Activated CD4-positive, alpha-beta T cell treated with anti-CD3 and anti-CD28 coated beads for 36 hours (primary cell): ENCODE measurements at regions of chr2 and their contacts with region 1.

Region 1: DNA sequence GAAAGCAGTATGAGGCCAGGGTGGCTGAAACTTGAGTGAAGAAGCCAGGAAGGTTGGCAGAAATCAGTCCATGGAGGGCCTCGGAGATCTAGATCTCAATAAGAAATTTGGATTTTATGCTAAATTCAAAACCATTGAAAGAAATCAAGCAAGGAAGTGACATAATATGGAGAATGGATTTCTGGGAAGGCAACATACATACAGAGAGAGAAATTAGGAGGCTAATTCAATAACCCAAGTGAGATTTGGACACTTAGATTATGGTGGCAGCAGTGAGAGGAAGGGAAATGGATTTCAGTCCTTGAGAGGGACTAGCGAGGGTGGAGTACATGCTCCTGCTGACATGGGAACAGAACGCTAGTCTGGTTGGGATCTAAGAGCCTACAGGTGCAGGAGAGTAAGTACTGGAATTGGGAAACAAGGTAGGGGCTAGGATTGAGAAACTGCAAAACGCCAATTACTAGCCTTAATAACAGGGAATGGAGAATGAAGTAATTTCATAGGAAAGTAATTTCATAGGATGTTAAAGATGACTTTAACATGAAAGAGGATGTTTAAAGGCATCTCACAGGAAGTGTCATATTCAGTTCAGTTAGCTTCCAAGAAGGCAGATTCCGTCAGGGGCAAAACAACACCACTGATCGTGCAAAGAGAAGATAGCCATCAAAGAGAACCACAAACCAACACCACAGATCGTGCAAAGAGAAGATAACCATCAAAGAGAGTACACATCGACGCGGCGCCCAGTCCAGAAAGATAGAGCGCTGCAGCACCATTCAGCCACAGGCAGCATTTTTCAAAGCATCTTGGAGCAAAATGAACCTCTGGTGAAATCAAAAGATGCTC is 27.2 kb downstream of the CDKL4 start:
- DNase-seq: peak; percentile 76
- ATAC-seq: peak; percentile 70
- H3K4me3 Mint-ChIP-seq: peak overlapping the region; percentile 45
- H3K27ac Mint-ChIP-seq: peak overlapping the region; percentile 88
- H3K4me1 Mint-ChIP-seq: peaks cover 44% of the 10 kb centered on the region
- H3K27me3 Mint-ChIP-seq: no peaks in the 10 kb centered on the region

Region 2: GRCh38 chr2:39099870-39100728 is 116.5 kb before region 1 on chr2:
- CTCF ChIA-PET with region 1: no interaction called
- POLR2A ChIA-PET with region 1: interaction called, 5 read pairs
- intact Hi-C with region 1: loop called in 1 of 2 experiments (anchors 2 kb)
- DNase-seq: peak; percentile 33
- ATAC-seq: peak; percentile 92
- H3K4me3 Mint-ChIP-seq: no peak overlapping the region
- H3K27ac Mint-ChIP-seq: peak overlapping the region; percentile 87
- H3K4me1 Mint-ChIP-seq: peaks cover 56% of the 10 kb centered on the region
- H3K27me3 Mint-ChIP-seq: no peaks in the 10 kb centered on the region

Region 3: DNA sequence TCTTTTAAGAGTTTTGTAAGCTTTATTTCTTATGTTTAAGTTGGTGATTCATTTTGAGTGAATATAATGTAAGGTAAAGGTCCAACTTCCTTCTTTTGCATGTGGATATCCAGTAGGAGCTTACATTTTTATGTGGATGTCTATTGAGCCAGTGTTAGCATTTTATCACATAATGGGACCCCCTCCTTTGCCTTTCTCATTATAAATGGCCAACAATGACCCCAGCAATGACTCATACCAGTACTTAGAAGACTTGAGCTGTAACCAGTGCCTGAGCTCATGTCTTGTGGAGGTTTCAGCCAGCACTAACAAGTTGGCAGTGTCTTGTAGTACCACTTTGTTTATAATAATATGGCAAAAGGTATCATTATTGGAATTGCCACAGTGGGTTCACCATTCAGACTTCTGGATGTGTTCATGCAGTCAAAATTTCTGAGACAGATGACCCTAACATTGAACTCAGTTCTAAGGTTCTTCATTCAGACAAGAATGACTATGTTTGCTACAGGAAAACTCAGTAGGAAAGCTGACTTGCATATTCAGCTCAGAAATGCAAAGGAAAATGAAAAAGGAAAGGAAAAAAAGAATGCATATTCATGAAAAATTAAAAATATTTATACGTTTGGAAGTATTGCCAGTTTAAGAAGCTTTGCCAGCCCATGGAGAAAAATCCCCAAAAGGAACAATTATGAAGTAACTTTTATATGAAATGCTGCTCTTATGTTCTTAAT is 13.8 kb before region 1 on chr2:
- CTCF ChIA-PET with region 1: interaction called, 4 read pairs
- POLR2A ChIA-PET with region 1: no interaction called
- intact Hi-C with region 1: loop called in 1 of 2 experiments (anchors 1 kb)
- DNase-seq: no peak
- ATAC-seq: peak; percentile 63
- H3K4me3 Mint-ChIP-seq: no peak overlapping the region
- H3K27ac Mint-ChIP-seq: peak overlapping the region; percentile 27
- H3K4me1 Mint-ChIP-seq: peaks cover 15% of the 10 kb centered on the region
- H3K27me3 Mint-ChIP-seq: no peaks in the 10 kb centered on the region